Activated CD4-positive, alpha-beta memory T cell treated with anti-CD3 and anti-CD28 coated beads for 36 hours (primary cell): ENCODE measurements at regions of chr2 and their contacts with region 1.

Region 1: GRCh38 chr2:127810619-127811396 is at the start of gene WDR33:
- DNase-seq: peak; percentile 97
- H3K4me3 Mint-ChIP-seq: peak within 1 kb of the TSS; percentile 92
- H3K27ac Mint-ChIP-seq: peak within 1 kb of the TSS; percentile 98
- H3K4me1 Mint-ChIP-seq: peaks cover 42% of the 10 kb centered on the region
- H3K27me3 Mint-ChIP-seq: no peaks in the 10 kb centered on the region
- total RNA-seq, gene WDR33: 62.9 to 64.7 TPM

Region 2: GRCh38 chr2:127701193-127701650 is 109.6 kb before region 1 on chr2 and contains the start of gene SFT2D3:
- CTCF ChIA-PET with region 1: interaction called, 5 read pairs
- POLR2A ChIA-PET with region 1: interaction called, 8 read pairs
- intact Hi-C with region 1: loop called (anchors 1 kb)
- DNase-seq: peak; percentile 95
- H3K4me3 Mint-ChIP-seq: peak within 1 kb of the TSS; percentile 92
- H3K27ac Mint-ChIP-seq: peak within 1 kb of the TSS; percentile 95
- H3K4me1 Mint-ChIP-seq: peaks cover 37% of the 10 kb centered on the region
- H3K27me3 Mint-ChIP-seq: no peaks in the 10 kb centered on the region
- total RNA-seq, gene SFT2D3: 3.1 to 3.6 TPM

Region 3: GRCh38 chr2:127735537-127736399 is 75.0 kb before region 1 on chr2:
- CTCF ChIA-PET with region 1: no interaction called
- POLR2A ChIA-PET with region 1: no interaction called
- intact Hi-C with region 1: loop called (anchors 2 kb)
- DNase-seq: no peak
- H3K4me3 Mint-ChIP-seq: no peak overlapping the region
- H3K27ac Mint-ChIP-seq: no peak overlapping the region
- H3K4me1 Mint-ChIP-seq: peaks cover 31% of the 10 kb centered on the region
- H3K27me3 Mint-ChIP-seq: no peaks in the 10 kb centered on the region

Region 4: GRCh38 chr2:127829845-127830246 is 19.0 kb after region 1 on chr2:
- CTCF ChIA-PET with region 1: no interaction called
- POLR2A ChIA-PET with region 1: interaction called, 10 read pairs
- intact Hi-C with region 1: loop called (anchors 1 kb)
- DNase-seq: peak; percentile 86
- H3K4me3 Mint-ChIP-seq: no peak overlapping the region
- H3K27ac Mint-ChIP-seq: peak overlapping the region; percentile 69
- H3K4me1 Mint-ChIP-seq: peaks cover 21% of the 10 kb centered on the region
- H3K27me3 Mint-ChIP-seq: no peaks in the 10 kb centered on the region

Region 5: GRCh38 chr2:127857265-127857808 is 46.5 kb after region 1 on chr2:
- CTCF ChIA-PET with region 1: no interaction called
- POLR2A ChIA-PET with region 1: interaction called, 4 read pairs
- intact Hi-C with region 1: loop called (anchors 1 kb)
- DNase-seq: peak; percentile 14
- H3K4me3 Mint-ChIP-seq: peak overlapping the region; percentile 88
- H3K27ac Mint-ChIP-seq: peak overlapping the region; percentile 77
- H3K4me1 Mint-ChIP-seq: peaks cover 51% of the 10 kb centered on the region
- H3K27me3 Mint-ChIP-seq: no peaks in the 10 kb centered on the region

Region 6: DNA sequence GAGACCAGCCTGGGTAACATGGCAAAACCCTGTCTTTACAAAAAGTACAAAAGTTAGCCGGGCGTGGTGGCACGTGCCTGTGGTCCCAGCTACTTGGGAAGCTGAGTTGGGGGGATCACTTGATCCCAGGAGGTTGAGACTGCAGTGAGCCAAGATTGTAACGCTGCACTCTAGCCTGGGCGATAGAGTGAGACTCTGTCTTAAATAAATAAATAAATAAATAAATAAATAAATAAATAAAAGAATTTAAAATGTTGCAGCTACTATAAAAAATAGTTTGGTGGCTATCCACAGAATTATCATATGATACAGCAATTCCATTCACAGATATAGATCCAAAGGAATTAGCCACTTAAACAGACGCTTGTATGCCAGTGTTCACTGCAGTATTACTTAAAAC is 124.5 kb after region 1 on chr2:
- CTCF ChIA-PET with region 1: no interaction called
- POLR2A ChIA-PET with region 1: no interaction called
- intact Hi-C with region 1: no loop called
- DNase-seq: no peak
- H3K4me3 Mint-ChIP-seq: no peak overlapping the region
- H3K27ac Mint-ChIP-seq: no peak overlapping the region
- H3K4me1 Mint-ChIP-seq: no peaks in the 10 kb centered on the region
- H3K27me3 Mint-ChIP-seq: no peaks in the 10 kb centered on the region